ENCODE measurements at regions of chr2 and their contacts with region 1.

Region 1: GRCh38 chr2:190382851-190383250 is 25.3 kb upstream of the MFSD6 start:
- H3K4me3 ChIP-seq: no peak overlapping the region
- H3K27ac ChIP-seq: no peak overlapping the region
- H3K4me1 ChIP-seq: no peaks in the 10 kb centered on the region
- CTCF ChIP-seq: peak; percentile 72

Region 2: GRCh38 chr2:190402986-190403603 is 20.2 kb after region 1 on chr2:
- CTCF ChIA-PET with region 1: no interaction called
- POLR2A ChIA-PET with region 1: no interaction called
- H3K4me3 ChIP-seq: no peak overlapping the region
- H3K27ac ChIP-seq: no peak overlapping the region
- H3K4me1 ChIP-seq: no peaks in the 10 kb centered on the region
- CTCF ChIP-seq: no peak

Region 3: GRCh38 chr2:190511104-190511503 is 128.3 kb after region 1 on chr2:
- CTCF ChIA-PET with region 1: interaction called, 10 read pairs
- POLR2A ChIA-PET with region 1: no interaction called
- H3K4me3 ChIP-seq: no peak overlapping the region
- H3K27ac ChIP-seq: no peak overlapping the region
- H3K4me1 ChIP-seq: 0 out of 2 replicates have a peak, but pooled peaks cover 2% of the 10 kb centered on the region
- CTCF ChIP-seq: peak; percentile 58; the same call in 1 of the 2 replicates

Measured in HEK293 (cell line).